A673 (cell line): ENCODE measurements at regions of chr17 and their contacts with region 1.

Region 1: DNA sequence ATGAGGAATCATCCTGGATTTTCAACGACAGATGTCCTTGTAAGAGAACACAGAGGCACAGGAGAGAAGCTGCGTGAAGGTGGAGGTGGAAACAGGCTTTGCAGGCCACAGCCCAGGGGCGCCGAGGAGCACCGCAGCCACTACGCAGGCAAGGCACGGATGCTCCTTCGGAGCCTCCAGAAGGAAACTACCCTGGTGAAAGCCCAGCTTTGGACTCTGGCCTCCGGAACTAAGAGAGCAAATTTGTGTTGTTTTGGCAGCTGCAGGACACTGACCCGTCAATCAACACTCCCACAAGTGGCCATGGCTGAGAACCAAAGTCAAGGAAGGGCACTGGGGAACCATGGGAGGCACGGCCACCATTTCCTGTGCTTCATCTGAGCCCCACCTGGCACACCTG is 3.4 kb downstream of the ARL16 start:
- DNase-seq: no peak
- H3K4me3 ChIP-seq: no peak overlapping the region
- H3K27ac ChIP-seq: no peak overlapping the region
- H3K4me1 ChIP-seq: peaks cover 23% of the 10 kb centered on the region
- H3K27me3 ChIP-seq: no peaks in the 10 kb centered on the region
- CTCF ChIP-seq: no peak

Region 2: DNA sequence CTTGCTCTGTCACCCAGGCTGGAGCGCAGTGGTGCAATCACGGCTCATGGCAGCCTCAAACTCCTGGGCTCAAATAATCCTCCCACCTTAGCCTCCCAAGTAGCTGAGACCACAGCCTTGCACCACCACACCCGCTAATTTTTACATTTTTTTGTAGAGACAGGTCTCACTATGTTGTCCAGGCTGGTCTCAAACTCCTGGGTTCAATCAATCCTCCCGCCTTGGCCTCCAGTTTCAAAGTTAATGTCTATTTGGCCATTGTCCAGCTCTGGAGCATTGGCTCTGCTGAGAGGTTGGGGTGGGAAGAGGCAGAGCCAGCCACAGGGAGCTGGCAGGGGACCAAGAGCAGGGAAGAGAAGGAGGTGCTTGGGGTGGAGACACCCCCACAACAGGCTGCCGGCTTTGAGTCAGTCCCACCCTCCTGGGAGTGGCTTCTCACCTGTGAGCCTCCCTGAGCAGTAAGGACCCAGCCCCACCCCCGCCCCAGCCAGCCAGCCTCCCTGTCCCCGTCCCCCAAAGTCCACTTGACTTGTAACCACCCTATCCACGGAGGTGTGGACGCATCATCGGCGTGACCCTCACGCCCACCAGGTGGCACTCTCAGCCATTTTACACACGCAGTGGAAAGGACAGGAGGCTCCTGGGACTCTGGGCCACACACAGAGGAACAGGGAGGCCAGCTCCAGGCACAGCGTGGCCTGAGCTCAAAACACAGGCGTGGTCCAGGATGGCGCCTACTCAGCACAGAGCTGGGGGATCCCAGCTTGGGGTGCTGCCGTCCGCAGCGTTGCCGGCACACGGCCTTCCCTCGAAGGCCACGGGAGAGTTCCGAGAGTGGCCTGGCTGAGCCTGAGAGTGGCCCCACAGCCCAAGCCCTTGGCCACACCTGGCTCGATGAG is 537.6 kb before region 1 on chr17:
- CTCF ChIA-PET with region 1: no interaction called
- POLR2A ChIA-PET with region 1: no interaction called
- intact Hi-C with region 1: no loop called
- DNase-seq: peak; percentile 85
- H3K4me3 ChIP-seq: no peak overlapping the region
- H3K27ac ChIP-seq: peak overlapping the region; percentile 8
- H3K4me1 ChIP-seq: peaks cover 11% of the 10 kb centered on the region
- H3K27me3 ChIP-seq: no peaks in the 10 kb centered on the region
- CTCF ChIP-seq: peak; percentile 85

Region 3: DNA sequence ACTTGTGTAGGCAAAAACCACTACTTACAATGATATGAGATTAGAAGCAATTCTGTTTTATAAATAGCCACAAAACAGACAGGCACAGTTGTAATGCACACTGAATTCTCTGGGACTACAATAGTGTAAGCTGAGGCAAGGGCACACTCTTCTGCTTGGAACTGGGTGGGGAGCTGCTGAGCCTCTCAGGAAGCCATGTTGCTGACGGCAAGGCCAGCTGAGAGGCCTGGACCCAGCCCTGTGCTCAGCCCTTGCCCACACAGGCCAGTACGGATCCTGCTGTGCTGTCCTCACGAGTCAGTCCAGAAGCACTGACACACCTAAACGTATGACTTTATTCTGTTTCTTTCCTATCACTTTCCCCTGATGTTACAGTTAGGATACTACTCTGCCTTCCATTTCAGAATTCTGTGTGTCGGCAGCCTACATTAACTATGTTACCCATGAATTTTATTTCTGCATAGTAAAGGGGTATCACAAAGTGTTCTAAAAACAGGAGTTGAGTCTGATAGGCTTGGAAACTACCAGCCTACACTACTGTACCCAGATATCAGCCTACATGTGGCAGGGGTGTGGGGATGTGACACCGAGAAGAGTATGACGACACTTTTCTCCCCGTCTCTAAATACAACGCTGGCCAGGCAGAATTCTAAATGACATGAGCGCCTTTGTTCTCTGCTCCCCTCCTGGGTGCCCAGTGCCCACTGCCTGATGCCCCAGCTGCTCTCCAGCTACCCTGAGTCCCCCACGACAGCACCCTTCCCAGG is 86.9 kb before region 1 on chr17:
- CTCF ChIA-PET with region 1: no interaction called
- POLR2A ChIA-PET with region 1: no interaction called
- intact Hi-C with region 1: no loop called
- DNase-seq: no peak
- H3K4me3 ChIP-seq: no peak overlapping the region
- H3K27ac ChIP-seq: no peak overlapping the region
- H3K4me1 ChIP-seq: no peaks in the 10 kb centered on the region
- H3K27me3 ChIP-seq: no peaks in the 10 kb centered on the region
- CTCF ChIP-seq: no peak

Region 4: GRCh38 chr17:81667754-81668153 is 12.4 kb before region 1 on chr17:
- CTCF ChIA-PET with region 1: interaction called, 3 read pairs
- POLR2A ChIA-PET with region 1: interaction called, 20 read pairs
- intact Hi-C with region 1: no loop called
- DNase-seq: peak; percentile 74
- H3K4me3 ChIP-seq: peak overlapping the region; percentile 93
- H3K27ac ChIP-seq: peak overlapping the region; percentile 46
- H3K4me1 ChIP-seq: peaks cover 18% of the 10 kb centered on the region
- H3K27me3 ChIP-seq: no peaks in the 10 kb centered on the region
- CTCF ChIP-seq: peak; percentile 72

Region 5: DNA sequence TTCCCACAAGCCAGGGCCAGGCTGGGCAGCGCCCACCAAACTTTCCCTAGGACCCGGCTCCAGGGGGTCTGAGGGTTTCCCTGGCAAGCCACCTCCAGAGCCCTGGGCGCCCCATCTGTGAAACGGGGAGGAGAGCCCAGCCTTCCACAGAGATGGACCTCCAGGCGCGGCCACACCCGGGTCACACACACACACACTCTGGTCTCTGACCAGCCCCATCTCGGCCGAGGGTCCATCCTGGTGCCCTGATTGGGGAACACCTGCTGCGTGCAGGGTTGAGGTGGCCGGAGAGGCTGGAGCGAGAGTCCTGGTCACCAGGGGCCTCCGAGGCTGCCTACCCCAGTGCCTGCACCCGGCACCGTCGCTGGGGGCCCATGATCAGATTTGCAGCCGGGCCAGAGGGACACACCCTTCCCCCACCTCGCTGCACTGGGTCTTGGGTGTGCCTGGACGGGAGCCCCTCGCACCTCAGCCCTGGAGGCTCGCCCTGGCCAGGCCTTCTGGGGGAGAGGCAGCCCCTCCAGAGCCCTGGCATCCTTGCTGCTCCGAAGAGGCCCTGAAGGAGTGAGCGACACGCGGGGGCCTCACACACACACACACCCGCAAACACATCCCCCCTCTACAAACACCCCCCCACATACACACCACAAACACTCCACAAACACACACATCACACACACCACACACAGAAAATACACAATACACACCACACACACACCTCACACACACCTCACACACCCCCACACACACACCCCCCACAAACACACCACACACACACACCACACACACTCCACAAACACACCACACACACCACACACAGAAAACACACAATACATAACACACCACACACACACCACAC is 61.7 kb after region 1 on chr17:
- CTCF ChIA-PET with region 1: no interaction called
- POLR2A ChIA-PET with region 1: no interaction called
- intact Hi-C with region 1: no loop called
- DNase-seq: no peak
- H3K4me3 ChIP-seq: no peak overlapping the region
- H3K27ac ChIP-seq: no peak overlapping the region
- H3K4me1 ChIP-seq: no peaks in the 10 kb centered on the region
- H3K27me3 ChIP-seq: no peaks in the 10 kb centered on the region
- CTCF ChIP-seq: no peak